ENCODE measurements at regions of chr9 and their contacts with region 1.

Region 1: DNA sequence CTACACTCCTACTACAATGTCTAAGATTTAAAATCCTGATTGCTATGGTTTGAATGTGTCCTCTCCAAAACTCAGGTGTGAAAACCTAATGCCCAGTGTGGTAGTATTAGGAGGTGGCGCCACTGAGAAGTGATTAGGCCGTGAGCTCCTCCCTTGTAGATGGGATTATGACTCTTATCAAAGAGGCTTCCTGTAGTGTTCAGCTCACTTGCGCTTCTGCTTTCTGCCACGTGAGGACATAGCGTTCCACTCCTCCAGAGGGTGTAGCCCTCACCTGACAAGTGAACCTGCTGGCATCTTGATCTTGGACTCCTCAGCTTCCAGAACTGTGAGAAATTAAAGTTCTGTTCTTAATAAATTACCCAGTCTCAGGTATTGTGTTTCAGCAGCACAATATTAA is 33.0 kb upstream of the WHRN start:
- DNase-seq: no peak
- ATAC-seq: no peak
- H3K4me3 ChIP-seq: no peak overlapping the region
- H3K27ac ChIP-seq: no peak overlapping the region
- H3K4me1 ChIP-seq: no peaks in the 10 kb centered on the region
- H3K27me3 ChIP-seq: no peaks in the 10 kb centered on the region

Region 2: GRCh38 chr9:114321759-114322158 is 216.5 kb before region 1 on chr9:
- intact Hi-C with region 1: no loop called
- DNase-seq: peak in 1 of 2 donors; percentile 28
- ATAC-seq: no peak
- H3K4me3 ChIP-seq: no peak overlapping the region
- H3K27ac ChIP-seq: no peak overlapping the region
- H3K4me1 ChIP-seq: no peaks in the 10 kb centered on the region
- H3K27me3 ChIP-seq: no peaks in the 10 kb centered on the region

Region 3: GRCh38 chr9:114397848-114398605 is 140.2 kb before region 1 on chr9:
- intact Hi-C with region 1: no loop called
- DNase-seq: peak; percentile 98 to 99
- ATAC-seq: peak; percentile 95
- H3K4me3 ChIP-seq: peak overlapping the region; percentile 56 to 76
- H3K27ac ChIP-seq: peak overlapping the region in 1 of 2 donors; percentile 78
- H3K4me1 ChIP-seq: peaks cover 0 to 2% of the 10 kb centered on the region in 2 donors
- H3K27me3 ChIP-seq: no peaks in the 10 kb centered on the region

Region 4: DNA sequence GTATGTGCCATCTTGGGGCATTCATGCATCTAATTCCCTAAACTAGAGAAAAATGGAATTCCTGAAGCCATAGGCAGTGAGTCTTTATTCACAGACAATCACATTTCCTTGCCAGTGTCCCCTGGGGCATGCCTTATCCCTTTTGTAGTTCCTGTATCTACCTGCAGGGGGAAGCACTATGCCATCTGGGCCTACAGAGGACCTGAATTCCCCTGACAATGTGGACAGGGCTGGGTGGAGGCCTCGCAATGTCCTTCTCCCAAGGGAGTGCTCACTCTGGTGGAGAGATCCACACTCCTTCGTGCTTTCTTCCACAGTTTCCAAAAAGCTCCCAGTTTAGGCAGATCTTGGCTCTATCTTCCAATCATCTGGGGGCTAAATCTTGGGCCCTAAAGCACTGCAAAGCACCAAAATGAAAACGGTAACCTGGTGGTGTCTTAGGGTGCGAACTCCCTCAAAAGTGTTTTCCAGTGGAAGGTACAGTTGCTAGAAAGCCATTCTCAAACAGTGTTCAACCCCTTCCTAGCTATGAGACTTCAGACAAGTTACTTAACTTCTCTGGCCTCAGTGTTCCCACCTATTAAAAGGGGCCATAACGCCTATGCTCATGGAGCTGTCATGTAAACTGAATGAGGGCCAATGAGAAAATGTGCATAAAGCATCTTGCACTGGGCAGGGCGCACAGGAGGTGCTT is 50.5 kb before region 1 on chr9:
- intact Hi-C with region 1: loop called in 1 of 2 experiments (anchors 5 kb)
- DNase-seq: peak in 1 of 2 donors; percentile 58
- ATAC-seq: peak; percentile 73
- H3K4me3 ChIP-seq: no peak overlapping the region
- H3K27ac ChIP-seq: no peak overlapping the region
- H3K4me1 ChIP-seq: no peaks in the 10 kb centered on the region
- H3K27me3 ChIP-seq: no peaks in the 10 kb centered on the region

Measured in aorta (tissue), 5 donors.